Colonic mucosa (tissue), 4 donors: ENCODE measurements at regions of chr9 and their contacts with region 1.

Region 1: DNA sequence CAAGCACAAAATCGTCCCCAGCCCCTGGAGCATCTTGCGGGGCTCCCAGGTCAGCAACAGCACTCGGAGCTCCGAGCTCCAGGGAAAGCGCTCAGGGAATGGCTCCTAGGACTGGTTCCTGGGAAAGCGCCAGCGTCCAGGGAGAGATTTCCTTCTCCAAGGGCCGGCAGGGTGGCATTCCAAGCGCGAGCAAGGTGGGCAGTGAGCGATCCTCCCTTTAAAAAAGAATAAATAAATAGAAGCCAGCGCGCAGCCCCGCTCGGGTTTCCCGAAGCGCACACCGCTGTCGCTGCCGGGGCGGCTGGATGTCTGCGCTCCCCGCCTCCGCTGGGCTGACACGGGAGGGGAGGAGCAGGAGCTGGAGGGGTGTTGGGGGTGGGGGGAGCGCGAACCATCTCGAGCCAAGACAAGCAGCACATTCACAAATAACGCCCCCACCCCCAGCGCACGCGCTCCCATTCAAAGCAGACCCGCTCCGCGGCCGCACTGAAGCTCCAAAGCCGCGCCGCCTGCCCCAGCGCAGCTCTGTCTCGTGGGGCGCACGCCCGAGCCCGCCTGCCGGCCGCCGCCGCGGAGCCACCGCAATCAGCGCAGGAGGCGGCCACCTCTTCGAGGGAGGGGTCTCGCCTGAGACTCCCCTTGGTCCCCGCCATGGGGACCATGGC is 327.4 kb downstream of the SH3GL2 start:
- DNase-seq: peak; percentile 72
- H3K4me3 ChIP-seq: peak overlapping the region; percentile 59
- H3K27ac ChIP-seq: peak overlapping the region; percentile 76
- H3K4me1 ChIP-seq: no peaks in the 10 kb centered on the region
- H3K27me3 ChIP-seq: peaks cover 6% of the 10 kb centered on the region
- CTCF ChIP-seq: no peak

Region 2: DNA sequence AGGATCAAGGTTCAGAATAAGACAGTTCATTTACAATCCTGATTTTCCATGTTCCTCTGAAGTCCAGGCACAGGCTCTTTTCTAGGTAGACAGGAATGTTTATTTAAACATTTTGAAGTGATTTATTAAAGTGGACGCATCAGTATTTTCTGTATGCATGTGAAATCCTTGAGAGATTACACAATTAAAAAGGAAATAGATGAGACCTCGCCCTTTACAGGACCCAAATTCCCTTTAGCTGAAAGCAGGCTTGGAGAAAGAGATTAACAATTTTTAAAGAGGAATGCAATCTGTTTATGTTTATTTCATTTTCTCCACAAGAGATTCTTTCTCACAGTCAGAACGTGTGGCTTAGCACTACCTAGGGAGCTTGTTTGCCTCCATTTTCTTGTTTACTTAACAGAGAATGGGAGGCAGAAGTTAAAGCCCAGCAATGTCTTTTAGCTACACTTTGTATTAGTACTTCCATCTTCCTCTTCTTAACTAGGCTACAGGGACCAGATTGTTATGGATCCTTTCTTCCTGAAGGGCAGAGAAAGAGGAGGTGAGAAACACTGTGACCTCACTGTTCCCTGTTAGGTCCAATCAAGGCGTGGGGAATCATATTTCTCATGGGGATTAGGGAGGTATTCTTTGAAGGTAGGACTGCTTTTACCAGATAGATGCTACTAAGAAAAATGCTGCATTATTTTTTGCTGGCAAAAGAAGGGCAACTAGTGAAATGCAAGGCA is 88.6 kb after region 1 on chr9:
- intact Hi-C with region 1: no loop called
- DNase-seq: no peak
- H3K4me3 ChIP-seq: no peak overlapping the region
- H3K27ac ChIP-seq: no peak overlapping the region
- H3K4me1 ChIP-seq: no peaks in the 10 kb centered on the region
- H3K27me3 ChIP-seq: no peaks in the 10 kb centered on the region
- CTCF ChIP-seq: no peak

Region 3: GRCh38 chr9:18056993-18057369 is 150.7 kb after region 1 on chr9:
- intact Hi-C with region 1: loop called (anchors 10 kb)
- DNase-seq: no peak
- H3K4me3 ChIP-seq: no peak overlapping the region
- H3K27ac ChIP-seq: no peak overlapping the region
- H3K4me1 ChIP-seq: peaks cover 4% of the 10 kb centered on the region
- H3K27me3 ChIP-seq: no peaks in the 10 kb centered on the region
- CTCF ChIP-seq: no peak